Heart right ventricle (tissue), 16 donors: ENCODE measurements at regions of chr2 and their contacts with region 1.

Region 1: GRCh38 chr2:127675331-127676261 is at the start of gene LIMS2:
- DNase-seq: peak; percentile 68 to 74
- ATAC-seq: peak; percentile 40 to 72 (median 60)
- H3K4me3 ChIP-seq: peak within 1 kb of the TSS; percentile 64 to 95 (median 78)
- H3K27ac ChIP-seq: peak within 1 kb of the TSS; percentile 88 to 98 (median 97)
- H3K4me1 ChIP-seq: peaks cover 8 to 75% (median 48%) of the 10 kb centered on the region in 9 donors
- H3K27me3 ChIP-seq: peaks cover 0 to 38% (median 0%) of the 10 kb centered on the region in 7 donors
- CTCF ChIP-seq: peak in 7 of 9 donors; percentile 9 to 51 (median 43)
- total RNA-seq, gene LIMS2: 150 to 285 (median 160) TPM

Region 2: GRCh38 chr2:127516031-127516762 is 159.4 kb before region 1 on chr2:
- intact Hi-C with region 1: loop called in 1 of 10 experiments (anchors 10 kb)
- DNase-seq: peak; percentile 82 to 87
- ATAC-seq: peak; percentile 79 to 90 (median 86)
- H3K4me3 ChIP-seq: no peak overlapping the region
- H3K27ac ChIP-seq: peak overlapping the region; percentile 48 to 82 (median 74)
- H3K4me1 ChIP-seq: peaks cover 11 to 67% (median 49%) of the 10 kb centered on the region in 9 donors
- H3K27me3 ChIP-seq: no peaks in the 10 kb centered on the region
- CTCF ChIP-seq: no peak

Region 3: DNA sequence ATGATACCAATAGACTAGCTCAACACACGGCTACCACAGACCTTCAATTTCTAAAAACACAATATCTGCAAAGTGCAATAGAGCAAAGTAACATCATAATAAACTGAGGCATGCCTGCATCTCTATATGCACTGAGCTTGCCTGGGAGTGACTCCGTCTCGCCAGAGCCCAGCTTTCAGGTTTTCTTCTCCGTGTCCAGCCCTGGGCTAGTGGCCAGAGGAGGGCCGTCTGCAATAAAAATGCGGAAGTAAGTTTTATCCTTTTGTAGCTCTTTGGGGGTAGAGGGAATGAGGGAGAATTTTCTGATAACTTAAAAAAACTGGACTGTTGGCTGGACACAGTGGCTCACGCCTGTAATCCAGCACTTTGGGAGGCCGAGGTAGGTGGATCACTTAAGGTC is 70.6 kb before region 1 on chr2:
- intact Hi-C with region 1: loop called in 2 of 10 experiments (anchors 5 kb)
- DNase-seq: no peak
- ATAC-seq: no peak
- H3K4me3 ChIP-seq: no peak overlapping the region
- H3K27ac ChIP-seq: no peak overlapping the region
- H3K4me1 ChIP-seq: no peaks in the 10 kb centered on the region
- H3K27me3 ChIP-seq: no peaks in the 10 kb centered on the region
- CTCF ChIP-seq: no peak

Region 4: DNA sequence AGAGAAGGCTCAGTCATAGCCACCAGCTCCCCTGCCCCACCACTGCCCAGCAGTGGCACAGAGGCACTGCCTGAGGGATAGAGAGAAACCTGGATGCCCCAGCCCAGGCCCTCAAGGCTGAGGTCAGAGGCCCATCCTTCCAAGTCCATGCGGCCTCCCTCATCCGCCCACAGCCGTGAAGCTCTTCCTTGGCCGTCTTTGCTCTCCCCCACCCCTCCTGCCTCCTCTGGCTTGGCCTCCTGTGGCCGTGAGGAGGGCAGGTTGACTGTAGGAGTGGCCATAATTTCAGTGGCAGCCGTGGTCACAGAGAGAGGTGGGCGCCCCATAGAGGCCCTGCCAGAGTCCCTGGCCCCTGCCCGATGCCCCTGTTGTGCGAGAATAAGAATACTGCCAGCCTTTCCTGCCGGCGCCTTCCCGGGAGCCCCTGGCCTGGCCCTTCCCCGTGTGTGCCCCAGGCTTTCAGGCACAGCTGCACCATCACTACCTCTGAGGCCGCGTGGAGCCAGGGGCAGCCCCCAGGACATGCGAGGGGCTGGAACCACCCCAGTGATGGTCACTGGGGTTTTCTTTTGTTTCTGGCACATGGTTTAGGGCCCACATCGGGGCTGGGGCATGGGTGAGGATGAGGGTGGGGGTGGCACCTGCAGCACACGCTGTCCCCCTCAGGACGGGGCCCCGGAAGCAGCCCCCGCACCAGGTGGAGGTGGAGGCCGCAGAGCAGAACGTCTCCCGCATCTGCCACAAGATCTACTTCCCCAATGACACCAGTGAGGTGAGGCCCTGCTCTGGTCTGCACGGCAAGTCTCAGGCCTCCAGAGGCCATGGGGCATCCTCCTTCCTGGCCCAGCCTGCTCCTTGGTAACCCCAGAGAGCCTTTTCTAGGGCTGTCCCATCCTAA is 42.8 kb before region 1 on chr2:
- intact Hi-C with region 1: loop called in 2 of 10 experiments (anchors 5 kb)
- DNase-seq: peak in 1 of 2 donors; percentile 16
- ATAC-seq: no peak
- H3K4me3 ChIP-seq: no peak overlapping the region
- H3K27ac ChIP-seq: peak overlapping the region; percentile 19 to 95 (median 65)
- H3K4me1 ChIP-seq: peaks cover 24 to 91% (median 63%) of the 10 kb centered on the region in 9 donors
- H3K27me3 ChIP-seq: no peaks in the 10 kb centered on the region
- CTCF ChIP-seq: no peak

Region 5: DNA sequence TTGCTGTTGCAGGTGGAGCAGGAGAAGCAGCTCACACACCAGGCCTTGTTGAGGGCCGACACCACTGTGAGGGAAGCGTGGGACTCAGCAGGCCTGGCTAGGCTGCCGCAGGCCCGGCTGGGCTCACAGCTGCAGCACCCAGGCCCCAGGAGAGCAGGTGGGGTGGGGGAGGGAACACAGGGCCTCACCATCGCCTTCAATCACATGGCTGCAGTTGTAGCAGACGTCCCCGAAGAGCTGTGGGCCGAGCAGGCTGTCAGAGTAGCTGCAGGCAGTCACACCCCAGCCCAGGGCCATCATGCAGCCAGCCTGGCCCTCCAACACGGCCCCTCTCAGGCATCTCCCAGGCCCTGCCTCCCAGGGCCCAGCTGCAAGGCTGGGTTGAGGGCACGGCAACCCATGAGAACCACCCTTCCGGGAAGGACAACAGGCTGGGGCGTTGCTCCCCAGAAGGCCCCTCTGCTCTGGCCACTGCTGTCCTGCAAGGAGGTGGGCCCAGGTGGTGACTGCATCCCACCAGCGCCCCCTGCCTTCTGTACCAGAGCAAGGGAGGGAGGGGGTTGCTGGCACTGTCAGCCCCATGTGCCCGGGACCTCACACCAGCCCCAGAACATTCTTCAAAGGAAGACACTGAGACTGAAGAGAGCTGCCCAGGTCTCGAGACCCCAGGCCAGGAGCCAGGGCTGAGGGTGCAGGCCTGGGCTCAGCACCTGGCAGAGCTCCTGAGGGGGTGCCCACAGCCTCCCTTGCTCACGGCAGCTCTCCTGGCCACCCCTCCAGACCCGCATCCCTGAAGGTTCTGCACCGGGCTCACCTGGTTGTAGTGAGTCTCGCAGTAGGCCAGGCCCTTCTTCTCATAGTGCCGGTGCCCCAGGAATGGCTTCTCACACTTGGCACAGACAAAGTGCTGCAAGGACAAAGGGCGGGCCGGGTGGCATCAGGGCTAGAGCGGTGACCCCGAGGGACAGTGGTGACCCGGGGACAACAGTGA is 35.2 kb before region 1 on chr2:
- intact Hi-C with region 1: loop called in 2 of 10 experiments (anchors 5 kb)
- DNase-seq: peak in 1 of 2 donors; percentile 13
- ATAC-seq: no peak
- H3K4me3 ChIP-seq: no peak overlapping the region
- H3K27ac ChIP-seq: peak overlapping the region in 9 of 10 donors; percentile 69 to 95 (median 89)
- H3K4me1 ChIP-seq: peaks cover 28 to 98% (median 61%) of the 10 kb centered on the region in 9 donors
- H3K27me3 ChIP-seq: no peaks in the 10 kb centered on the region
- CTCF ChIP-seq: peak in 7 of 9 donors; percentile 12 to 51 (median 28)

Region 6: GRCh38 chr2:127649684-127650040 is 25.9 kb before region 1 on chr2:
- intact Hi-C with region 1: loop called in 2 of 10 experiments (anchors 2 to 5 kb)
- DNase-seq: peak; percentile 76 to 88
- ATAC-seq: peak; percentile 0 to 51 (median 31)
- H3K4me3 ChIP-seq: no peak overlapping the region
- H3K27ac ChIP-seq: peak overlapping the region; percentile 42 to 95 (median 83)
- H3K4me1 ChIP-seq: peaks cover 66 to 98% (median 86%) of the 10 kb centered on the region in 9 donors
- H3K27me3 ChIP-seq: no peaks in the 10 kb centered on the region
- CTCF ChIP-seq: peak; percentile 85 to 93 (median 89)

Region 7: DNA sequence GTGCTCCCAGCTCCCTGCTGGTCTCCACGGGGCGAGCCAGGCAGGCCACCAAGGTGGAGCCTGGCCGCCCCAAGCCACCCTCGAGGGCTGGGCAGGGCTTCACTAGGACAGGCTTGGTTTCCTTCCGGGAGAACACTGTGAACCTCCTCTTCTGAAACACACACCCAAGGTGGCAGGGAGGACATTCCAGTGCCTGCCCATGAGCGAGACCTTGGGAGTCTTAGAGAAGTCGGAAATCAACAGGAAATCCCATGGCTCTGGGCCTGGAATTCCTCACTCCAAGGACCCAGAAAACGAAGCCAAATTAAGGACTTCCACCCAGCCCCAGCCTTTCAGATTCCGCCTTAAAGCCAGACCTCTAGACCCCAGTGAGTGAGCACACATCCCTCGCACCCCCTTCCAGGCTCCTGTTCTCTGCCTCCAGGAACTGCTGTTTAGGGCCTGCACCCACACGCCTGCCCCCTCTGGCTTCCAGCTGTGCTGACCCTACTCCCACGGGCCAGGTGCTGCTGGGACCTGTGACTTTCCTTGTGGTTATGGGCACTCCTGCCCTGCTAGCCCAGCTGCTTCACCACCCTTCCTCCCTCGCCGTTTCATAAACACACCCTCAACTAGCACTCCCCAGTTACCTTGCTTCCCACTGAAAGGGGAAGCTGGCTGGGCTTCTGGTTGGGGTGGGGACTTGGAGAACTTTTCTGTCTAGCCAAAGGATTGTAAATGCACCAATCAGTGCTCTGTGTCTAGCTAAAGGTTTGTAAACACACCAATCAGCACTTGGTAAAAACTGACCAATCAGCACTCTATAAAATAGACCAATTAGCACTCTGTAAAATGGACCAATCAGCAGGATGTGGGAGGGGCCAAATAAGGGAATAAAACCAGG is 15.9 kb before region 1 on chr2:
- intact Hi-C with region 1: loop called in 2 of 10 experiments (anchors 2 kb)
- DNase-seq: peak; percentile 68 to 70
- ATAC-seq: peak; percentile 30 to 67 (median 49)
- H3K4me3 ChIP-seq: peak overlapping the region in 2 of 10 donors; percentile 2 to 21
- H3K27ac ChIP-seq: peak overlapping the region; percentile 78 to 95 (median 86)
- H3K4me1 ChIP-seq: peaks cover 72 to 97% (median 92%) of the 10 kb centered on the region in 9 donors
- H3K27me3 ChIP-seq: peaks cover 0 to 19% (median 0%) of the 10 kb centered on the region in 7 donors
- CTCF ChIP-seq: no peak

Region 8: DNA sequence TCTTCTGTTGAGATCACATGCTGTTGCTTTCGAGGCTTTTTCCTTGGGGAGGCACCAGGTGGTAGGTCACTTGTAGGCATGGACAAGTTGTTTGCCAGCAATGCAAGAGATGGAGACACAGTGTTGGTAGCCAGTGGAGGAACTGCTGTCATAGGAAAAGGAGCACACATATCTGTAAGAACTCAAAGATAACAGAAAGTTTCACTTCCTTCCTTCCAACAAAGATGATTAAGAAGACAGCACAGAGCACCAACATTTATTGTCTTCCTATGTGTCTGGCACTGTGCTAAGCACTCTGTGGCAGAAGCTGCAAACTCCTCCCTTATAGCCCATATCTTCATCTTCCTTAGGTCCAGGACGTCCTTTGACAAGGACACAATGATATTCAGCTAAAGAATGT is 274.7 kb after region 1 on chr2:
- intact Hi-C with region 1: no loop called
- DNase-seq: no peak
- ATAC-seq: no peak
- H3K4me3 ChIP-seq: no peak overlapping the region
- H3K27ac ChIP-seq: no peak overlapping the region
- H3K4me1 ChIP-seq: peaks cover 0 to 21% (median 18%) of the 10 kb centered on the region in 9 donors
- H3K27me3 ChIP-seq: no peaks in the 10 kb centered on the region
- CTCF ChIP-seq: no peak

Region 9: DNA sequence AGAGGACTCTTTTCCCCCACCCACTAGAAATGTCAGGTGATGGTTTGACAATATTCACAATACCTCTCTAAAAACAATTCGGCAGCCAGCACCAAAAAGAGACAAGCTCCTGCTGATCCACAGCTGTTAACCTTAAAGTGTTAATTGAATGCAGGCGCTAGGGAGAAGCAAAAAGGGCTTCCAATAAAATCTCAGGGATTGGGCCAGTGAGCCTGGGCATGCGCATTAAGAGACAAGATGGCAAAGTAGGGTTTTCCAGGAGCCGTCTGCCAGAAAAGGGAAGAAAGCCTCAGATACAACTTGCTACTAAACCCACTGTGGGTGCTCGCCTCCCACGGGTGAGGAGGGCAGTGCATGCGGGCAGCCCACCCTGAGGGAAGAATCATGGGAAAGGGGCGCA is 544.3 kb after region 1 on chr2:
- intact Hi-C with region 1: no loop called
- DNase-seq: no peak
- ATAC-seq: no peak
- H3K4me3 ChIP-seq: no peak overlapping the region
- H3K27ac ChIP-seq: no peak overlapping the region
- H3K4me1 ChIP-seq: no peaks in the 10 kb centered on the region
- H3K27me3 ChIP-seq: no peaks in the 10 kb centered on the region
- CTCF ChIP-seq: no peak